Activated CD4-positive, alpha-beta T cell treated with anti-CD3 and anti-CD28 coated beads, Interleukin-2, amount 10 ng/mL, durations not matched to agents 24 days and 14 days (primary cell): ENCODE measurements at regions of chr6 and their contacts with region 1.

Region 1: DNA sequence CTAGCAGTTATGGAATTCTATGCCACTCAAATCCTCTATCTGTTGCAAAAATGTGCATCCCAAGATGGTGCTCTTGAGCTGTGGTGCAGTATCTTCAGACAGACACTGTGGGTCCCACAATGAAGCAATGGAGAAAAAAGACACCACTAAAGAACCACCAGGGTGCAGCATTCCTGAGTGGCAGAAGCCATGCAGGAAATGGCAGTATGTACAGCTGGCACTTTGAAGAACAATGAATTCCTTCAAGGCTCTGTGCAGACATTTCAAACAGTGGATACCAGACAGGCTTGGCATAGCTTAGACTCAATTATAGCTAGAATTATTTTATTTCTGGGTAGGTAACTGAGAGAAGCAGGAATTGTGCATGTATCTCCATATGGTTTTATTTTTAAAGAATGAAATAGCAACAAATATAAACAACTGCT is 24.0 kb upstream of the HDAC2 start:
- DNase-seq: peak; percentile 83
- H3K4me3 Mint-ChIP-seq: no peak overlapping the region
- H3K27ac Mint-ChIP-seq: no peak overlapping the region
- H3K4me1 Mint-ChIP-seq: peaks cover 3% of the 10 kb centered on the region
- H3K27me3 Mint-ChIP-seq: peaks cover 23% of the 10 kb centered on the region

Region 2: DNA sequence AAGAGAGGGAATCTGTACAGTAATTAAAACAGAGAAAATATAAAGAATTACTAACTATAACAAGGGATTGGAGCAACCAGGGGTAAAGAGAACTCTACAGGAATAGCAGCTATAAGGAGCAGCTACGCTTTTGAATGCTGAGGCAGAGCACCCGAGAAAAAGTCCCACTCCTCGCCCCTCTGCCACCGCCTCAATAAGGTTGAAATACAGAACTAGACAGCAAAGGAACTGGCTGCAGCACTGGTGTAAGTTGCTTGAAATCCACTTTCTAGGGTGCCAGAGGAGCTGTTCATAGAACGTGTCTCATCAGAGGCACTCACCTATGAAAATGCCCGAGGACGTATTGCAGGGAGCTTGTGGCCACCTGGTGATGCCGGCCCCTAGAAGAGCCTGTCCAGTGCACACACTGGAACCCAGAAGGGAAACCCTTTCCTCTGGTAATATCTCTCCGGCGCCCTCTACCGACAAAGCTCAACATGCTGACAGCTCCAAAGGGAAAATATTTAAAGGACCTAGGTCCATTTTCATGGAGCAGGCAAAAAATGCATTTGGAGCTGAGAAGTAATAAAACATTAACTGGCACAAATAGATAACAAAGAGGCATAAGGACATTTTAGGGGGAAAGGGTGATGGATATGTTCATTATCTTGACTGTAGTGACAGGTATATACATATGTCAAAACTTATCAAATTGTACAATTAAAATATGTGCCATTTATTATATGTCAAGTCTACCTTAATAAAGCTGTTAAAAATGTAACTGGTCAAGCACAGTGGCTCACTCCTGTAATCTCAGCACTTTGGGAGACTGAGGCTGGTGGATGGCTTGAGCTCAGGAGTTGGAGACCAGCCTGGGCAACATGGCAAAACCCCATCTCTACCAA is 113.4 kb after region 1 on chr6:
- intact Hi-C with region 1: loop called (anchors 5 kb)
- DNase-seq: peak; percentile 80
- H3K4me3 Mint-ChIP-seq: no peak overlapping the region
- H3K27ac Mint-ChIP-seq: no peak overlapping the region
- H3K4me1 Mint-ChIP-seq: no peaks in the 10 kb centered on the region
- H3K27me3 Mint-ChIP-seq: peaks cover 13% of the 10 kb centered on the region

Region 3: DNA sequence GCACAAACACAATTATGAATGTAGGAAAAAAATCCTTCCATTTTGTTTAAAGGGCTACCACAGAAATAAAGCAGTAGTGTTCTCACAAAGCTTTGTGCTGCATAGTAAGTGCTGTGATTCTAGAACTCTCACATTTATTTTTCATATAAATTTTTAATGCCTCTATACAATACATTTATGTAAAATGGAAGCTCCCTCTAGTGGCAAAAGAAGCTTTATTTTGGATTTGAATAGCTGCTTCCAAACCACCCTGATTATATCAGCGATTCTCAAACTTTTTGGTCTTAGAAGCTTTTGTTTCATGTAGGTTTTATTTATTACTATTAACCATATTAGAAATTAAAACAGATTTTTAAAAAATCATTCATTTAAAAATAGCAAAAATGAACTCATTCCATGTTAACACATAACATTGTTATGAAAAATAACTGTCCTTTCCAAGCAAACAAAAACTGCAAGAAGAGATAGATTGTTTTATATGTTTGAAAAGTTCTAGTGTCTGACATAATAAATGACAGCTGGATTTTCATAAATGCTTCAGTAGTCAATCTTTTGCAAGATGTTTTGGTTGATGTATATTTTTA is 309.5 kb after region 1 on chr6:
- intact Hi-C with region 1: loop called (anchors 10 kb)
- DNase-seq: no peak
- H3K4me3 Mint-ChIP-seq: no peak overlapping the region
- H3K27ac Mint-ChIP-seq: no peak overlapping the region
- H3K4me1 Mint-ChIP-seq: no peaks in the 10 kb centered on the region
- H3K27me3 Mint-ChIP-seq: no peaks in the 10 kb centered on the region